BJ (cell line): ENCODE measurements at regions of chr14 and their contacts with region 1.

Region 1: DNA sequence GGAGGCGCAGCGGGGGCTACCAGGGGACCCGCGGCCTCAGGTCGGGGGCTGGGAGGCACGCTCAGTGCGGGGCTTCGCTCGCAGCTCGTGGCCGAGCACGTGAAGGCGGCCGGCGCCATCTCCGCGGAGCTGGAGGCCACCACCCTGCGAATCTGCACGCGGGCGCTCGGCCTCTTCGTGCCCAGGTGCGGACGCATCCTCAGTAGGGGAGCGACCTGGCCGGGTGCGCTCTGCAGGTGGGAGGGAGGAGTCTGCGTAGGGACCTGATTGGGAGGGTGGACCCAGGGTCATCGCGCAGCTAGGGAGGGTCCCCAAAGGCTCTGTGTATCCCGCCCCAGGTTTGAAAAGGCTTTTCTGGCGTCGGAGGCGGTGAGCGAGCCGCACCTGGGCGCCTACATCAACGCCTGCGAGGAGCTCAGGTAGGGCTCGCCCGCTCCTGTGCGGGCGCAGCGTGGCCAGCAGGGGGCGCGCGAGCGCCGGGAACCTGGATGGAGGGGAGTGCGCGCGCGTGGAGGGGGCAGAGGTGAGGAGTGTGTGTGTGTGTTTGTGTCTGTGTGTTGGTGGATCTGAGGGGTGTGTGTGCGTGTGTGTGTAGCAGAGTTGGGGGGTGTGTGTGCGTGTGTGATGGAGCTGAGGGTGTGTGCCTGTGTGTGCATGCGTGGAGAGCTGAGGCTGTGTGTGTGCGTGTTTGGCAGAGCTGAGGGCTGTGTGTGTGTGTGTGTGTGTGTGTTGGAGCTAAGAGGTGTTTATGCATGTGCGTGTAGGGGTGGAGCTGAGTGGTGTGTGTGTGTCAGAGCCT is 10.3 kb downstream of the EXOC3L4 start:
- DNase-seq: no peak
- H3K4me3 ChIP-seq: no peak overlapping the region
- H3K27me3 ChIP-seq: peaks cover 19% of the 10 kb centered on the region
- CTCF ChIP-seq: peak; percentile 99

Region 2: DNA sequence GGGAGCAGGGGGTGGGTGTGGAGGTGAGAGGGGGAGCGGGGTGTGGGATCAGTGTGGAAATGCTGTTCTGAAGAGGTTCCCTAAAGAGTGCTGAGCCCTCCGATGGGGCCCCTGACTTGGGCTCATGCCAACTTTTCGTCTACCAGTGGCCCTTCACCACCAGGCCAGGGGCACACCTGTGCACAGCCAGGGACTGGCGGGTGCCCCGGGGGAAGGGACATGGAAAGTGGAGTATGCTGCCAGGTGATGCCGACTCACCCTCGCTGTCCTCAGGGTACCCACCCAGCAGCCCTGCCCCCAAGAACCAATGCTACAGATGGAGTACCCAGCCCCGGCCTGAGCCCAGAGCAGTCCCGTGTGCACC is 156.2 kb before region 1 on chr14:
- CTCF ChIA-PET with region 1: no interaction called
- POLR2A ChIA-PET with region 1: no interaction called
- DNase-seq: no peak
- H3K4me3 ChIP-seq: no peak overlapping the region
- H3K27me3 ChIP-seq: no peaks in the 10 kb centered on the region
- CTCF ChIP-seq: no peak

Region 3: GRCh38 chr14:103085106-103086091 is 19.5 kb before region 1 on chr14:
- CTCF ChIA-PET with region 1: interaction called, 17 read pairs
- POLR2A ChIA-PET with region 1: no interaction called
- DNase-seq: no peak
- H3K4me3 ChIP-seq: no peak overlapping the region
- H3K27me3 ChIP-seq: peaks cover 4% of the 10 kb centered on the region
- CTCF ChIP-seq: peak; percentile 36

Region 4: GRCh38 chr14:103126493-103127304 is 21.8 kb after region 1 on chr14:
- CTCF ChIA-PET with region 1: interaction called, 22 read pairs
- POLR2A ChIA-PET with region 1: no interaction called
- DNase-seq: no peak
- H3K4me3 ChIP-seq: 0 out of 2 replicates have a peak overlapping the region, but pooled peaks have one; percentile 6
- H3K27me3 ChIP-seq: no peaks in the 10 kb centered on the region
- CTCF ChIP-seq: no peak

Region 5: GRCh38 chr14:103160866-103161391 is 56.1 kb after region 1 on chr14:
- CTCF ChIA-PET with region 1: interaction called, 17 read pairs
- POLR2A ChIA-PET with region 1: no interaction called
- DNase-seq: no peak
- H3K4me3 ChIP-seq: no peak overlapping the region
- H3K27me3 ChIP-seq: peaks cover 9% of the 10 kb centered on the region
- CTCF ChIP-seq: no peak

Region 6: DNA sequence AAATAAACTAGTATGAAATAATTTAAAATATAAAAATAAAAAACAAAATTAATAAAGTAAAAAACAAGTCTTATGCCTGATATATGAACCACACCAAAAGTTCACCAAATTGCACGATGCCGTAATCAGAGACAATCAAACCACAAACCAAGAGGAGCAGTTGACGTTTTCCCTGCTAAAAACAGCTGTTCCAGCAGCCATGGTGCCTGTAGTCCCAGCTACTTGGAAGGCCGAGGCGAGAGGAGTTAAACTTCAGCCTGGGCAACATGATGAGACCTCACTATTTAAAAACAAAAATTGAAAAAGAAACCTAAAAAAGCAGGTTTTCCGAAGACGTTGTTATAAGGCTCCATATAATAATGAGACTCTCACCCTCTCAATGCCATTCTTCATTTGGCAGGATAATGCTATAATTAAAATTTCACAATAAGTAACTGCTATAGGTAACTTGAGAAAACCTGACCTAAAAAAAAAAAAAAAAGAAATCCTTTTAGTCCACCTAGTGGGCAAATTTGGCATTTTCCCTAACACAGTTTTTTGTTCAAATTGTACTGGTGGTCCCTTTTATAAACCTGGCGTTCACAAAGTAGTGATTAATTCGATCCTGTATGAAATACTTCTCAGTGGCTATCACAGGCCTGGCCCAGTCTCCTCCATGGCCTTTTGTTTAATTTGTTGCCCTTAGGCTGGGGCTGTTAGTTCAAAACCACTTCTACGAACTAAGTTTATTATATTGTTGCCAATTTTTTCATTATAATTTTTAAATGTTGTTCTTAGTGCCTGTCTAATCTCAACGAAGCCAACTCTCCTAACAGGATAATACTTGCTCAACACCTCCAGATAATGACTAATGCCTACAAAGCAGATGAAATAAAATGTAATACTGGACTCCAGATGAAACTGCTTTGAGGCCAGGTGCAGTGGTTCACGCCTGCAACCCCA is 80.5 kb after region 1 on chr14:
- CTCF ChIA-PET with region 1: interaction called, 234 read pairs
- POLR2A ChIA-PET with region 1: no interaction called
- DNase-seq: no peak
- H3K4me3 ChIP-seq: no peak overlapping the region
- H3K27me3 ChIP-seq: peaks cover 6% of the 10 kb centered on the region; the same call in 1 of the 2 replicates
- CTCF ChIP-seq: peak; percentile 61

Region 7: GRCh38 chr14:103281496-103282231 is 176.8 kb after region 1 on chr14:
- CTCF ChIA-PET with region 1: interaction called, 315 read pairs
- POLR2A ChIA-PET with region 1: no interaction called
- DNase-seq: no peak
- H3K4me3 ChIP-seq: no peak overlapping the region
- H3K27me3 ChIP-seq: peaks cover 3% of the 10 kb centered on the region; the same call in 1 of the 2 replicates
- CTCF ChIP-seq: peak; percentile 79